ENCODE measurements at regions of chr4 and their contacts with region 1.

Region 1: GRCh38 chr4:41454423-41454822 is 83.5 kb upstream of the LIMCH1 start:
- DNase-seq: no peak
- ATAC-seq: peak in 6 of 8 donors; percentile 39 to 76 (median 54)
- H3K4me3 ChIP-seq: no peak overlapping the region
- H3K27ac ChIP-seq: peak overlapping the region in 2 of 10 donors; percentile 6 to 27
- H3K4me1 ChIP-seq: peaks cover 10 to 71% (median 37%) of the 10 kb centered on the region in 9 donors
- H3K27me3 ChIP-seq: no peaks in the 10 kb centered on the region
- CTCF ChIP-seq: no peak

Region 2: DNA sequence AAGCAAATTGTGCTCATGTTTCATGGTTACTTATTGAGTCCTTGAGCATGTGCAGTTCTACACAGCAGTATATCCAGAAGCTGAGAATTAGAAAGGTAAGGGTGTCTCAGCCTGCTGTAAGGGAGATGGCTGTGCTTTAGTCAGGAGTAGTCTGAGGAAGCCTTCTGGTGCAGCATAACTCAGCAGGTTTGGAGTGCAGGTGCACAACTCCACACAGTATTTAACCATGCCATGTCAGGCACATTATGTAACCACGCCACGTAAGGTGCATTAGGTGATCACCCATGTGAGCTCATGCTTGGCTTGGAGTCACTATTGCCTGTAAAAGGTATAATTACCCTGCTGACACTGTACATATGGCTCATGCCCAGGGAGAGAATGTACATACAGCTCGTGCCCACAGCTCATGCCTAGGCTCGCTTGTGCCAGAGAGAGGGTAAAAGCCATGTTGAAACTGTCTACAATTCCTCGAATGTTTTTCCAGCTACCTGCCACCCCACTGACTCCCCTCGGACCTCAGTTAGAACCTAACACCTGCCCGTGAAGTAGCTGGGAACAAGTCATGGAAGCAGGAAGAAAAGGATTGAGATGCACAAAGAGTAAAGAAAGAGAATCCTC is 159.9 kb before region 1 on chr4:
- intact Hi-C with region 1: loop called in 1 of 10 experiments (anchors 10 kb)
- DNase-seq: no peak
- ATAC-seq: no peak
- H3K4me3 ChIP-seq: no peak overlapping the region
- H3K27ac ChIP-seq: no peak overlapping the region
- H3K4me1 ChIP-seq: peaks cover 0 to 29% (median 0%) of the 10 kb centered on the region in 9 donors
- H3K27me3 ChIP-seq: no peaks in the 10 kb centered on the region
- CTCF ChIP-seq: no peak

Region 3: DNA sequence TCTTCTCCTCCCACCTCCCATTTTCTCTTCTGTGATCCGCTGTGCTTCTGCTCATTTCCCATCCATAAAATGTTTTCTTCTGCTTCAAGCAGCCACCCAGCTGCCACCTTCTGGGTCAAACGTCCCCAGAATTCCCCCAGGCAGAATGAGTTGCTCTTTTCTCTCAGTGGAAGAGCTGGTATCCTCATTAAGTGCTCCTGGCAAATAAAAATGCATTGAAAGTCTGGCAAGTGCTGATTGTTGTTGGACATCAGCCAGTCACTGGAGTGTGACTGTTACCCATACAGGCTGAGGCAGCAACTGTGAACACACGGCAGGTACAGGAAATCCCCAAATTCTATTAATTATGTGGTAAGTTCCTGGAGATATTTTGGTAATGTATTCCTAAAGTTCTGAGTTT is 136.2 kb after region 1 on chr4:
- intact Hi-C with region 1: loop called in 1 of 10 experiments (anchors 10 kb)
- DNase-seq: peak in 1 of 2 donors; percentile 67
- ATAC-seq: peak; percentile 31 to 80 (median 57)
- H3K4me3 ChIP-seq: no peak overlapping the region
- H3K27ac ChIP-seq: peak overlapping the region in 9 of 10 donors; percentile 14 to 80 (median 45)
- H3K4me1 ChIP-seq: peaks cover 18 to 84% (median 70%) of the 10 kb centered on the region in 9 donors
- H3K27me3 ChIP-seq: no peaks in the 10 kb centered on the region
- CTCF ChIP-seq: no peak

Measured in heart right ventricle (tissue), 16 donors.